Activated naive CD8-positive, alpha-beta T cell treated with anti-CD3 and anti-CD28 coated beads, Interleukin-2, amount 10 ng/mL, durations not matched to agents 7 days and 5 days (primary cell): ENCODE measurements at regions of chr15 and their contacts with region 1.

Region 1: GRCh38 chr15:85582131-85583079 is 202.0 kb downstream of the AKAP13 start:
- DNase-seq: peak; percentile 66
- ATAC-seq: peak; percentile 89
- H3K4me3 Mint-ChIP-seq: peak overlapping the region; percentile 80
- H3K27ac Mint-ChIP-seq: peak overlapping the region; percentile 98
- H3K4me1 Mint-ChIP-seq: peaks cover 54% of the 10 kb centered on the region
- H3K27me3 Mint-ChIP-seq: no peaks in the 10 kb centered on the region

Region 2: DNA sequence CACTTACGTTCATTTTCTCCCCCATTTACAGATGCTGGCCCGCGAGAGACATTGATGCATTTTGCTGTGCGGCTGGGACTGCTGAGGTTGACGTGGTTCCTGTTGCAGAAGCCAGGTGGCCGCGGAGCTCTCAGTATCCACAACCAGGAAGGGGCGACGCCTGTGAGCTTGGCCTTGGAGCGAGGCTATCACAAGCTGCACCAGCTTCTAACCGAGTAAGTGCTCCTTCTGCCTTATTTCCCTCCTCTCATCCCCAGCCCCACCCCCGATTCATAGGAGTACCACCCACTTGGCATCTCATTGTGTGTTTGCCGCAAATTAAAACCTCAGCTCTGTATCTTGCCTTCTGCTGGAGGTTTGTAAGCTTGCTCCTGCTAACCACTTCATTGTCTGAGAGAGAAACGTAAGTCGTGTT is 38.7 kb before region 1 on chr15:
- POLR2A ChIA-PET with region 1: interaction called, 14 read pairs
- DNase-seq: peak; percentile 68
- ATAC-seq: peak; percentile 88
- H3K4me3 Mint-ChIP-seq: peak overlapping the region; percentile 56
- H3K27ac Mint-ChIP-seq: peak overlapping the region; percentile 65
- H3K4me1 Mint-ChIP-seq: peaks cover 59% of the 10 kb centered on the region
- H3K27me3 Mint-ChIP-seq: no peaks in the 10 kb centered on the region